Breast epithelium (tissue), 4 donors: ENCODE measurements at regions of chr16 and their contacts with region 1.

Region 1: GRCh38 chr16:78990309-78990701 is 610.2 kb downstream of the MAF start:
- DNase-seq: no peak
- H3K4me3 ChIP-seq: no peak overlapping the region
- H3K27ac ChIP-seq: peak overlapping the region in 1 of 2 donors; percentile 6
- H3K4me1 ChIP-seq: peaks cover 0 to 4% of the 10 kb centered on the region in 2 donors
- H3K27me3 ChIP-seq: no peaks in the 10 kb centered on the region
- CTCF ChIP-seq: no peak
- POLR2A ChIP-seq: no peak

Region 2: GRCh38 chr16:80014241-80014939 is 1024.1 kb after region 1 on chr16:
- intact Hi-C with region 1: loop called (anchors 10 kb)
- DNase-seq: no peak
- H3K4me3 ChIP-seq: no peak overlapping the region
- H3K27ac ChIP-seq: no peak overlapping the region
- H3K4me1 ChIP-seq: no peaks in the 10 kb centered on the region
- H3K27me3 ChIP-seq: no peaks in the 10 kb centered on the region
- CTCF ChIP-seq: no peak
- POLR2A ChIP-seq: no peak